Ovary (tissue), 10 donors: ENCODE measurements at regions of chr14 and their contacts with region 1.

Region 1: DNA sequence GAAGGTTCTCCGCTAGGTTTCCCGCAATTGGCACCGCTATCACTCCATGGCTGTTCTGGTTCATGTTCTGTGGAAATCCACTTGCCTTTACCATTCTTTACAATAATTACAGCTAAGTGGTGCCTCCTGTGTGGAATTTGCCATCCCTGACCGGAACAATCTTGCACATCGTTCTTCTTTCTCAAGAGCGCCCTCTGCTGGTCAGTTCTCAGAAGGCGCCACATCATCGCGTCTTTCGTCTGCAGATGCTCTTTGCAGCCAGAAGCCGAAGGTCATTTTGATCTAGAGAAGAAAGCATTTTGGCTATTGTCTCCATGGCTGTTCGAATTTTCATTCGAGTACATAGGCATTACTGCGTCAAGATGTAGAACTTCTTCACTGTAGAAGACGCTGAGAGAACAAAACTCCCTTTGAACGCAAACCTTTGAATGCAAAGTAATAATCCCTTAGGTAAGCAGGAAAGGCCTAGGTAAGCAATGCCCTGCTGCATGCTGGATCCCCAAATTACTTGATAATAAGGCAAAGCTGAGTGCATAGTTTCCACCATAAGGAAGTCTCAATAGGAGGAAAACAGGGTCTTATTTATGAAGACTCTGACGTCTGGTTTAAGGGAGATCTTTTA is 10.1 kb upstream of the RTRAF start:
- DNase-seq: peak; percentile 69 to 85 (median 82)
- H3K4me3 ChIP-seq: no peak overlapping the region
- H3K27ac ChIP-seq: no peak overlapping the region
- H3K4me1 ChIP-seq: peaks cover 3% of the 10 kb centered on the region
- H3K27me3 ChIP-seq: no peaks in the 10 kb centered on the region
- CTCF ChIP-seq: peak; percentile 64 to 72 (median 69)
- EP300 ChIP-seq: no peak
- POLR2A ChIP-seq: no peak

Region 2: DNA sequence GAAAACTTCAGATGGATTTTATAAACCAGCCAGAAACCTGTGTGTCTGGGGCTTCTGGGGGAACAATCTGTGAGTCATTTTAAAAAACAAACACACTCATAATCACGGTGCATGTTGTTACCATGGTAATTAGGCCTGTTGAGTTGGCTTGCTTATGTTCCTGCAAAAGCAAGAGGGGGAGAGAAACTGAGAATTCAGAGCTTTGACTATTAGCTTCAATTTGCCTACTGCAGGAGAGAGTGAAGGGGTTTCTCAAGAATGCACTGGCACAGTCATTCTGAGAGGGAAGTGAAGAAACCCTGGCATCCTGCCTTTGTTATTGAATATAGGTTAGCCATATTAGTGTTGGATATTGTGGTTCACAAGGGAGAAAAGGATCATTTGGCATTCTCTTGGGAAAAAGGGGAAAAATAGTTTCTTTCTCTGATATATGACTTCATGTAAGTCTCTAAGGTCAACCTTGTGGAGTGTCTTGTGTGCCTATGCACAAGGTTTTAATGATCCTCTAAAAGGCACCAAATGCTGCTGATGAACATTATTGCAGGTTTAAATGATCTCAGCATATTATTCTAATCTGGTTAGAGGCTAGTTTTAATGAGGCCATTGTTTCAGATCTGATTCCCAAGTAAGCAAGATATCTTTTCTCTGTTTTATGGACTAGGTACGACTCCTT is 105.8 kb before region 1 on chr14:
- intact Hi-C with region 1: loop called in 1 of 4 experiments (anchors 10 kb)
- DNase-seq: no peak
- H3K4me3 ChIP-seq: no peak overlapping the region
- H3K27ac ChIP-seq: no peak overlapping the region
- H3K4me1 ChIP-seq: peaks cover 2% of the 10 kb centered on the region
- H3K27me3 ChIP-seq: no peaks in the 10 kb centered on the region
- CTCF ChIP-seq: no peak
- EP300 ChIP-seq: no peak
- POLR2A ChIP-seq: no peak

Region 3: GRCh38 chr14:52695481-52696091 is 716.4 kb after region 1 on chr14 and contains the start of gene ERO1A:
- intact Hi-C with region 1: no loop called
- DNase-seq: peak; percentile 70 to 85 (median 83)
- H3K4me3 ChIP-seq: peak within 1 kb of the TSS; percentile 76
- H3K27ac ChIP-seq: peak within 1 kb of the TSS; percentile 72 to 92
- H3K4me1 ChIP-seq: peaks cover 2% of the 10 kb centered on the region
- H3K27me3 ChIP-seq: no peaks in the 10 kb centered on the region
- CTCF ChIP-seq: no peak
- EP300 ChIP-seq: no peak
- POLR2A ChIP-seq: peak; percentile 50
- total RNA-seq, gene ERO1A: 15.3 to 30.6 (median 21.4) TPM